ENCODE measurements at regions of chr17 and their contacts with region 1.

Region 1: DNA sequence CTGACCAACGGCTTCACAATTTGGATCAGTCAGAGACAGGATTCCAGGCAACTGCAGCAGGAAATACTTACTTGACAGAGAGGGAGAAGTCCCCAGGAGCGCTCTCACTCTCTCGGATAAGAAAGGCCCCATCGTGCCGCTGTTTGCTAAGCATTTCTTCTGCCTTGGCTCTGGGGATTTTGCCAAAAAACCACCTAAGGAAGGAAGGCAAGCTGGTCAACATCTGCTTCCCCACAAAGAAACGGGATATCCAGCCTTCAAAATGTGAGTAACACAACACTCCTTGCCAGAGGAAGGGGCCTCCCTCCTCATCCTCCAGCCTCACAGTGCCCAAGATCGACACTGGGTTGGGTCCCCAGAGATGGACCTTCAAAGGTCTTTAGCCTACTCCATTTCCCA is 36.6 kb upstream of the SLC25A19 start:
- DNase-seq: no peak
- ATAC-seq: no peak
- H3K4me3 ChIP-seq: no peak overlapping the region
- H3K27ac ChIP-seq: no peak overlapping the region
- H3K4me1 ChIP-seq: no peaks in the 10 kb centered on the region
- CTCF ChIP-seq: no peak
- EP300 ChIP-seq: no peak
- POLR2A ChIP-seq: no peak
- RAD21 ChIP-seq: no peak

Region 2: DNA sequence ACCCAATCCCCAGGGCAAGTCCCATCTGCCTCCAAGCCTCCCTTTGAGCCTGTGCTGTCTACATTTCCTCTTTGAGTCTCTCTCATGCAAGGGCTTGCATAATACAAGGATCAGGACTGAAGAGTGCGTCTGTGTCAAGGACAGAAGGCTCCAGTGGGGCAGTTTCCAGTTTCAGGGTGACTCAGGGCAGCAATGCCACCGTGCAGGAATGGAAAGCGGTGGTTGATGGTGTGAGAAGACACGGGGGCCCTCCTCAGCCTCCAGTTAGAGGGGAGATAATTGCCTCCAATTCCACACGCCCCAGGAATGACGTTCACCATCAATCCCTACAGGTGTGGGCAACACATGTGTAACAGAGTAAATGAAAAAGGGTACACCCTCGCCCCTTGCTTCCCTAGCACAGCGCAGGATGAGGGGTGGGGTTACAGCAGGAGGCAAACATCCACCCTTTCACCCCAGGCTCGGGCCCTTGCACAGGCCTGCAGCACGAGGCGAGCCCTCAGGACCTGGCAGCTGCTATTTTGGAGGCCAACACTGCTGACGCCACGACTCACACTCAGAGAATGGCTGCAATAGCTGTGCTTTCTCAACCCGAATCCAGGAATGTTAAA is 11.8 kb before region 1 on chr17:
- CTCF ChIA-PET with region 1: interaction called, 40 read pairs
- POLR2A ChIA-PET with region 1: no interaction called
- DNase-seq: no peak
- ATAC-seq: peak in 1 of 2 experiments; percentile 11; a peak in 1 of 6 replicates
- H3K4me3 ChIP-seq: no peak overlapping the region
- H3K27ac ChIP-seq: no peak overlapping the region
- H3K4me1 ChIP-seq: peaks cover 10% of the 10 kb centered on the region
- CTCF ChIP-seq: no peak
- EP300 ChIP-seq: no peak
- POLR2A ChIP-seq: no peak
- RAD21 ChIP-seq: no peak

Region 3: GRCh38 chr17:75338335-75338734 is 12.5 kb after region 1 on chr17:
- CTCF ChIA-PET with region 1: interaction called, 31 read pairs
- POLR2A ChIA-PET with region 1: no interaction called
- DNase-seq: no peak
- ATAC-seq: no peak
- H3K4me3 ChIP-seq: no peak overlapping the region
- H3K27ac ChIP-seq: no peak overlapping the region
- H3K4me1 ChIP-seq: no peaks in the 10 kb centered on the region
- CTCF ChIP-seq: no peak
- EP300 ChIP-seq: no peak
- POLR2A ChIP-seq: no peak
- RAD21 ChIP-seq: no peak